K562 (cell line): ENCODE measurements at regions of chr9 and their contacts with region 1.

Region 1: GRCh38 chr9:34899535-34900158 is 58.4 kb upstream of the PHF24 start:
- DNase-seq: peak; percentile 59 to 76 (median 62)
- ATAC-seq: peak; percentile 99
- H3K4me3 ChIP-seq: no peak overlapping the region
- H3K27ac ChIP-seq: no peak overlapping the region
- H3K4me1 ChIP-seq: no peaks in the 10 kb centered on the region
- H3K27me3 ChIP-seq: no peaks in the 10 kb centered on the region
- CTCF ChIP-seq: peak; percentile 69 to 83 (median 73)
- EP300 ChIP-seq: no peak
- POLR2A ChIP-seq: no peak
- RAD21 ChIP-seq: peak; percentile 79 to 87

Region 2: DNA sequence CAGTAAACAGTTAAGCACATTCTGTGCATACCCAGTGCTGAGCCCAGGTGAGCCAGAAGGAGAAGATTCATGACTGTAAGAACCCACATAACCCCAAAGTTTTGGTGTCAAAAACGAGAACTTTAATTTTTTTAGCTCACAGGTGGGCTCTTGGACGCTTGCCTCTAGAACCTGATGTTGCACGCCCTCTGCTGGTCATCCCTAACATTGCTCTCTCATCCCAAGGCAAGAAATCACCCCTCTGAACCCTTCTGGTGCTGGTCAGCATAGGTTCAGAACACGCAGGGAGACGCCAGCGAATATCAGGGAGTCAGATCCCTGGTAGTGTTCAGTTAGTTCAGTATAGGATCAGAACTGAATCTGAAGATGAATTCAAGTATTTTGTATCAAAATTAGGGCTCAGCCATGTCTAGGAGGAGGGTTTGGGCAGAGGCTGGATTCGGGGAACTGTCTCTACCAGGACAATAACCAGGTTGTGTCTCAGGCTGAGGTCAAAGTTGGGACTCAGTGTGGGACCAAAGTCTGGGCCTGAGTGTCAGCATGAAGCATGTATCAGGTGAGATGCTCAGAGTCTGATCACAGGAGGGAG is 85.8 kb after region 1 on chr9:
- CTCF ChIA-PET with region 1: interaction called, 6 read pairs
- POLR2A ChIA-PET with region 1: interaction called, 3 read pairs
- in situ Hi-C with region 1: no loop called
- intact Hi-C with region 1: loop called (anchors 1 kb)
- DNase-seq: peak; percentile 34 to 74 (median 38)
- ATAC-seq: no peak
- H3K4me3 ChIP-seq: no peak overlapping the region
- H3K27ac ChIP-seq: no peak overlapping the region
- H3K4me1 ChIP-seq: peaks cover 6 to 17% of the 10 kb centered on the region in 2 experiments; a peak in 3 of 5 replicates
- H3K27me3 ChIP-seq: peaks cover 0 to 15% of the 10 kb centered on the region in 2 experiments; a peak in 1 of 5 replicates
- CTCF ChIP-seq: peak; percentile 71 to 84 (median 75)
- EP300 ChIP-seq: no peak
- POLR2A ChIP-seq: no peak
- RAD21 ChIP-seq: peak in 1 of 2 experiments; percentile 52; a peak in 3 of 4 replicates

Region 3: GRCh38 chr9:35051069-35051967 is 151.7 kb after region 1 on chr9:
- CTCF ChIA-PET with region 1: interaction called, 7 read pairs
- POLR2A ChIA-PET with region 1: interaction called, 3 read pairs
- in situ Hi-C with region 1: no loop called
- intact Hi-C with region 1: loop called (anchors 5 kb)
- DNase-seq: peak; percentile 43 to 72 (median 50)
- ATAC-seq: peak; percentile 92
- H3K4me3 ChIP-seq: no peak overlapping the region
- H3K27ac ChIP-seq: no peak overlapping the region
- H3K4me1 ChIP-seq: peaks cover 0 to 2% of the 10 kb centered on the region in 2 experiments; a peak in 2 of 5 replicates
- H3K27me3 ChIP-seq: no peaks in the 10 kb centered on the region
- CTCF ChIP-seq: peak; percentile 68 to 71 (median 70)
- EP300 ChIP-seq: no peak
- POLR2A ChIP-seq: no peak
- RAD21 ChIP-seq: peak; percentile 27 to 73; a peak in 3 of 4 replicates

Region 4: GRCh38 chr9:35096035-35096849 is 196.6 kb after region 1 on chr9 and contains the start of gene PIGO:
- CTCF ChIA-PET with region 1: interaction called, 12 read pairs
- POLR2A ChIA-PET with region 1: interaction called, 4 read pairs
- in situ Hi-C with region 1: no loop called
- intact Hi-C with region 1: no loop called
- DNase-seq: peak; percentile 81 to 90 (median 82)
- ATAC-seq: peak; percentile 97
- H3K4me3 ChIP-seq: peak within 1 kb of the TSS; percentile 99
- H3K27ac ChIP-seq: peak within 1 kb of the TSS; percentile 100
- H3K4me1 ChIP-seq: peaks cover 6 to 15% of the 10 kb centered on the region in 2 experiments; a peak in 4 of 5 replicates
- H3K27me3 ChIP-seq: no peaks in the 10 kb centered on the region
- CTCF ChIP-seq: peak; percentile 78 to 85 (median 82)
- EP300 ChIP-seq: no peak
- POLR2A ChIP-seq: peak; percentile 90
- RAD21 ChIP-seq: peak; percentile 57 to 61
- polyA plus RNA-seq, gene PIGO: 5.6 to 5.9 TPM

Region 5: GRCh38 chr9:35258676-35259474 is 359.2 kb after region 1 on chr9:
- CTCF ChIA-PET with region 1: no interaction called
- POLR2A ChIA-PET with region 1: no interaction called
- in situ Hi-C with region 1: no loop called
- intact Hi-C with region 1: loop called (anchors 2 kb)
- DNase-seq: peak in 2 of 4 experiments; percentile 19 to 64
- ATAC-seq: peak; percentile 76
- H3K4me3 ChIP-seq: no peak overlapping the region
- H3K27ac ChIP-seq: no peak overlapping the region
- H3K4me1 ChIP-seq: no peaks in the 10 kb centered on the region
- H3K27me3 ChIP-seq: no peaks in the 10 kb centered on the region
- CTCF ChIP-seq: peak; percentile 58 to 71 (median 61); a peak in 4 of 6 replicates
- EP300 ChIP-seq: no peak
- POLR2A ChIP-seq: no peak
- RAD21 ChIP-seq: peak; percentile 55 to 75

Region 6: DNA sequence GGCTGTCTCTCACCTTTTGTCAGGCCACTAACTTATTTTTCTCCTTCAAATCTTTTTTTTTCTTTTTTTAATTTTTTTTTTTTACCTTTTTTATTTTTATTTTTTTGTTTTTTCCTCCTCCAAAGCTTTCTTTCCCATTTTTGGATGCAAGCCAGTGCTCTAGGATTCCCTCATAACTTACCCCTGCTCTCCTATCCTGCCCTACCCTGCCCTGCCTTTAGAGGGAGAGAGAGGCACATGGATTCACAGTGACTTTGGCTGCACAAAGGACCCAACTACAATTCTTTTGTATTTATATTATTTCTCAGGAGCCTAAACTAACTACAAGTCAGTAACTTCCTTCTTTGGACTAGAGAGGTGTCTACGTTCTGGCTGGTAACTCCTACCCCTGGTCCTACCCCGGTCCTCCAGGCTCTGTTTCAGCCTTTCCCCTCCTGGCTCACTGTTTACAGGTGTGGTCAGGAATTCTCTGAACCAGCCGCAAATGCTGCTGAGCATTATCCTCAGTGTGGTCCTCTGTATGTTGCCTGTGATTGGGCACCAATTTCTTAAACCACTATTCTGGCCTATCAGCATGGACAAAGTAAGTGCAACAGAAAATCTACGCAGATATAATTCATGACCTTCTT is 581.8 kb after region 1 on chr9:
- CTCF ChIA-PET with region 1: interaction called, 4 read pairs
- POLR2A ChIA-PET with region 1: no interaction called
- in situ Hi-C with region 1: loop called (anchors 5 kb)
- intact Hi-C with region 1: loop called (anchors 1 kb)
- DNase-seq: peak; percentile 23 to 65 (median 46)
- ATAC-seq: peak; percentile 90
- H3K4me3 ChIP-seq: no peak overlapping the region
- H3K27ac ChIP-seq: no peak overlapping the region
- H3K4me1 ChIP-seq: no peaks in the 10 kb centered on the region; a peak in 1 of 5 replicates
- H3K27me3 ChIP-seq: no peaks in the 10 kb centered on the region; a peak in 1 of 5 replicates
- CTCF ChIP-seq: peak; percentile 68 to 80 (median 79)
- EP300 ChIP-seq: no peak
- POLR2A ChIP-seq: no peak
- RAD21 ChIP-seq: peak; percentile 64 to 76

Region 7: GRCh38 chr9:35553670-35554543 is 654.3 kb after region 1 on chr9:
- CTCF ChIA-PET with region 1: no interaction called
- POLR2A ChIA-PET with region 1: no interaction called
- in situ Hi-C with region 1: loop called (anchors 25 kb)
- intact Hi-C with region 1: no loop called
- DNase-seq: peak; percentile 62 to 70 (median 64)
- ATAC-seq: peak; percentile 97
- H3K4me3 ChIP-seq: no peak overlapping the region
- H3K27ac ChIP-seq: no peak overlapping the region
- H3K4me1 ChIP-seq: peaks cover 0 to 3% of the 10 kb centered on the region in 2 experiments; a peak in 3 of 5 replicates
- H3K27me3 ChIP-seq: no peaks in the 10 kb centered on the region
- CTCF ChIP-seq: peak; percentile 82 to 91 (median 88)
- EP300 ChIP-seq: no peak
- POLR2A ChIP-seq: no peak
- RAD21 ChIP-seq: peak; percentile 86 to 90